Heart right ventricle (tissue), 16 donors: ENCODE measurements at regions of chr3 and their contacts with region 1.

Region 1: DNA sequence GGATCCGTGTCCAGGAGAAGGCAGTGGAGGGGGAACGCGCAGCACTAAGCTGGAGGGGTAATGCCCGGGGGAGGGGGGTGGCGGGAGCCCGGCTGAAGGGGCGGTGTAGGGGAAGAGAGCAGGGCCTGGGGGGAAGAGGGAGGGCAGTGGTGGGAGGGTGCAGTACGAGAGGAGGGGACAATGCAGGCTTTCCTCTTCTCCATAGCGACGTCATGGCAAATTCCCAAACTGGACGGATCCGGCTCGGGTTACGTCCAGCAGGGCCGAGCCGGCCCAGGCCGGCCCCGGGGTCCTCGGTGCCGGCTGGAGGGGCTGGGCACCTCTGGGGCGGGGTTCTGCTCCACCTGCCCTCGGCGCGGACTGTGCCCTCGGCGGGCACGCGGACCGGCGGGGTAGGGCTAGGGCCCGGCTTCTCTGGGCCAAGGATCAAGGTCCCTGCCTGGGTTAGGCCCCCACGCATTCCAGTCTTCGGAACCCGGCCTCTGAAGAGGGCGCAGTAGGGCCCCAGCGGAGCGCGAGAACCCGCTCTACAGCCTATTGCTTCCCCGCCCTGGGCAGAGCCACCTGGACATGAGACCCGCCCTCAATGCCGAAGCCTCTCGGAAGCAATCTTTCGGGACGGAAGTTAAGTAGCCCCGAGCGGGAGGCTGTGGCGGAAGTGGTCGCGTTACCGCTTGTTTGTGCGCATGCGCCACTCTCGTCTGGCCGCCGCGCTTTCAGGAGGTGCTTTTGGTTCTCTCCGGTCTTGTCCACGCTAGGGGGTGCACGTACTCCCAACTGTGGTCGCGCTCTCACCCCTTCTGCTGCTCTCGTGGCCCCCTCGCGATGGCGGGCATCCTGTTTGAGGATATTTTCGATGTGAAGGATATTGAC is 1.4 kb downstream of the POLR2H start:
- DNase-seq: peak; percentile 95 to 96
- ATAC-seq: peak; percentile 79 to 87 (median 82)
- H3K4me3 ChIP-seq: peak overlapping the region; percentile 79 to 97 (median 92)
- H3K27ac ChIP-seq: peak overlapping the region; percentile 94 to 100 (median 99)
- H3K4me1 ChIP-seq: peaks cover 4 to 31% (median 22%) of the 10 kb centered on the region in 9 donors
- H3K27me3 ChIP-seq: no peaks in the 10 kb centered on the region
- CTCF ChIP-seq: peak in 8 of 9 donors; percentile 38 to 82 (median 59)

Region 2: GRCh38 chr3:184335661-184336546 is 27.0 kb before region 1 on chr3:
- intact Hi-C with region 1: loop called in 1 of 10 experiments (anchors 2 kb)
- DNase-seq: peak; percentile 88 to 91
- ATAC-seq: peak; percentile 63 to 75 (median 68)
- H3K4me3 ChIP-seq: peak overlapping the region; percentile 51 to 96 (median 82)
- H3K27ac ChIP-seq: peak overlapping the region; percentile 81 to 99 (median 96)
- H3K4me1 ChIP-seq: peaks cover 18 to 65% (median 45%) of the 10 kb centered on the region in 9 donors
- H3K27me3 ChIP-seq: no peaks in the 10 kb centered on the region
- CTCF ChIP-seq: no peak

Region 3: DNA sequence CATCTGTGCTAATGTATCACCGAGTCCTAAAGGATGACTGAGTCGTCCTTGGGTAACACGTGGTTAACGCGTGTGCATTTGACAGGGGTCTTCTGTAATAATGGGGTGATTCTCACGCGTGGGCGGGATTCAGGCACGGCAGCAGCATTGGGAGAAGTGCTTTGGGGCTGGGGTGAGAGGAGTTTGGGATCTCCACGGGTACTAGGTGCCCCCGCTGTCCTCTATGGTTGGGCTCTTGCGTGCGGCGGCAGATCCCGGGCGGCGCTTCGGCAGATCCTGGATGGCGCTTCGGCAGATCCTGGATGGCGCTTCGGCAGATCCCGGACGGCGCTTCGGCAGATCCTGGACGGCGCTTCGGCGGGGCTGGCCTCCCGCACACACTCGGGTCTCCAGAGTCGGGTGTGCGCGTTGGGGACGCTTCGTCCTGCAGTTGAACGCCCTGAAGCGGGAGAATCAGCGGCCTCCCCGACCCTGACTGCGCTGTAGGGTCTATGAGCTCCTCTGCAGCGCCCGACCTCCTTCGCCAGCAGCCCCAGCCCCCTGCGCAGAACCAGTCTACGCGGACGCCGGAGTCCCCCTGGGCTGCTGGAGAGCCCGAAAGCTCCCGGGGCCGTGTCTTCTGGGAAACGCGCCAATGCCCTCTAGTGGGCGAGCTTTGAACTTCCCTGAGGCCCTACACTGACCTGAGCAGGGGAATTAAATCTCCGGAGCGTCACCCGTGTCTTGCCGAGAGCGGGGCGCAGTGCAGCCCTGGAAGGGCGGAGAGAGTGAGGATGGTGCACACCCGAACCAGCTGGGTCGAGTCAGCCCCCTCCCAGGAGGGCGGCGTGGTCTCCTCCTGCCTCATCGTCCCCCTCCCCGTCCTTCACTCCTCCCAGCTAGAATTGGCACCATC is 150.6 kb after region 1 on chr3:
- intact Hi-C with region 1: loop called in 1 of 10 experiments (anchors 10 kb)
- DNase-seq: peak; percentile 85 to 88
- ATAC-seq: peak; percentile 96 to 100 (median 98)
- H3K4me3 ChIP-seq: peak overlapping the region in 9 of 10 donors; percentile 22 to 57 (median 52)
- H3K27ac ChIP-seq: peak overlapping the region in 6 of 10 donors; percentile 29 to 69 (median 54)
- H3K4me1 ChIP-seq: peaks cover 0 to 23% (median 10%) of the 10 kb centered on the region in 9 donors
- H3K27me3 ChIP-seq: peaks cover 0 to 68% (median 51%) of the 10 kb centered on the region in 7 donors
- CTCF ChIP-seq: peak; percentile 78 to 94 (median 87)

Region 4: GRCh38 chr3:184543843-184544512 is 181.1 kb after region 1 on chr3:
- intact Hi-C with region 1: no loop called
- DNase-seq: peak in 1 of 2 donors; percentile 81
- ATAC-seq: peak; percentile 61 to 77 (median 72)
- H3K4me3 ChIP-seq: no peak overlapping the region
- H3K27ac ChIP-seq: no peak overlapping the region
- H3K4me1 ChIP-seq: peaks cover 0 to 12% (median 3%) of the 10 kb centered on the region in 9 donors
- H3K27me3 ChIP-seq: peaks cover 0 to 45% (median 35%) of the 10 kb centered on the region in 7 donors
- CTCF ChIP-seq: peak; percentile 85 to 97 (median 92)

Region 5: GRCh38 chr3:184711493-184712247 is 348.8 kb after region 1 on chr3 and contains the start of gene MAGEF1:
- intact Hi-C with region 1: loop called in 1 of 10 experiments (anchors 10 kb)
- DNase-seq: peak; percentile 85 to 86
- ATAC-seq: peak; percentile 92 to 98 (median 94)
- H3K4me3 ChIP-seq: peak within 1 kb of the TSS; percentile 66 to 97 (median 86)
- H3K27ac ChIP-seq: peak within 1 kb of the TSS; percentile 85 to 98 (median 94)
- H3K4me1 ChIP-seq: peaks cover 5 to 59% (median 31%) of the 10 kb centered on the region in 9 donors
- H3K27me3 ChIP-seq: no peaks in the 10 kb centered on the region
- CTCF ChIP-seq: no peak
- total RNA-seq, gene MAGEF1: 26.7 to 33.9 (median 30.5) TPM

Region 6: DNA sequence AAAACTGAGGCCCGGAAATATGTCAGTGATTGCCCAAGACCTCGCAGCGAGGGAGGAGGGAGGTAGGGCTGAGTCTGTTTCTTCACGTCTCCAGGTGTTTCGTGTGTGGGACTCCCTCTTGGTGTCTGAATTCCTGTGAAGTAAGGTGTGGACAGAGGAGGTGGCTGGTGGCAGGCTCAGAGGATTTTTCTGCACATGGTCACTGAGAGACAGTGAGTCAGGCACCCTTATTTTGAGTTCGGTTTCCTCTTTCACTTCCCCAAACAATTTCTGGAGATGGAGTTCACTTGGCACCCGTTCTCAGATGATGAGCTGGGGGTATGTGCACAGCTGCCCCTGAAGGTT is 402.8 kb after region 1 on chr3:
- intact Hi-C with region 1: loop called in 1 of 10 experiments (anchors 10 kb)
- DNase-seq: no peak
- ATAC-seq: no peak
- H3K4me3 ChIP-seq: no peak overlapping the region
- H3K27ac ChIP-seq: no peak overlapping the region
- H3K4me1 ChIP-seq: peaks cover 0 to 15% (median 6%) of the 10 kb centered on the region in 9 donors
- H3K27me3 ChIP-seq: peaks cover 0 to 21% (median 0%) of the 10 kb centered on the region in 7 donors
- CTCF ChIP-seq: no peak

Region 7: GRCh38 chr3:185605566-185605965 is 1242.7 kb after region 1 on chr3:
- intact Hi-C with region 1: no loop called
- DNase-seq: no peak
- ATAC-seq: no peak
- H3K4me3 ChIP-seq: no peak overlapping the region
- H3K27ac ChIP-seq: no peak overlapping the region
- H3K4me1 ChIP-seq: no peaks in the 10 kb centered on the region
- H3K27me3 ChIP-seq: no peaks in the 10 kb centered on the region
- CTCF ChIP-seq: no peak

Region 8: DNA sequence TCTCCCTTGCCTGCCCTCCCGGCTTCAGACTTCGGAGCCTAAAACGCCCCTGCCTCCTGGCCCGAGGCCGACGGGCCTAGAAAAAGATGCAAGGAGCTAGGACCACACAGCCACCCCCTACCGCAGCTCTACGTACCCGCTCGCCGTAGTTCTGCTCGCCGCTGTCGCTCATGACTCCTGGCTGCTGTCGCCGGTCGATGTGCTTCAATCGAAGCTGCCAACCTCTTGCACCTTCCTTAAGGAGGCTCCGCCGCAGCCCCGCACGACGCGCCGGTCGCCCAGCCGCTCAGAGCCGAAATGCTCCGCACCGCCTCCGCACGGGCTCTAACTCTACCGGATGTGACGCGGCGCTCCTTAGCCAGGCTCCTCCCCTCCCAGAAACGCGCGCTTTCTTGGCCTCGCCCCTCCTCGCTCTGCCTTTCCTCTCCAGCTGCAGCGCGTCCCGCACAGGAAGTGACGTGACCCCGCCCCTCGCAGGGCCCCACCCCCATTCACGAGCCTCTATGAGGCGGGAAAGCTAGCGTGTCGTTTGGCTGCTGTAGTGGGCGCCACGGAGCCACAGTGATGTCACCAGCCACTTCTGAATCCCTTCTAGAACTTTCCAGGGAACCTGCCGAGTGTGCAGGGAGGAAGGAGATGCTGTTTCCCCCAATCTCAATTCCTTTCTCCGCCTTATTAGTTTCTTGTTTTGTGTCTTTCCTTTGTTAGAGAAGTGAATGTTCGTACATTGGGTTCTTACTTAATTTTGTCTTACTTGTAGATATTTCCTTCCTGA is 1575.0 kb after region 1 on chr3 and contains the start of gene TRA2B:
- intact Hi-C with region 1: loop called in 1 of 10 experiments (anchors 10 kb)
- DNase-seq: peak; percentile 99
- ATAC-seq: peak; percentile 98 to 99 (median 99)
- H3K4me3 ChIP-seq: peak within 1 kb of the TSS; percentile 80 to 100 (median 94)
- H3K27ac ChIP-seq: peak within 1 kb of the TSS; percentile 98 to 100 (median 100)
- H3K4me1 ChIP-seq: peaks cover 0 to 39% (median 30%) of the 10 kb centered on the region in 9 donors
- H3K27me3 ChIP-seq: no peaks in the 10 kb centered on the region
- CTCF ChIP-seq: peak in 8 of 9 donors; percentile 12 to 66 (median 40)
- total RNA-seq, gene TRA2B: 46.3 to 75.9 (median 52.1) TPM